Motor neuron (in vitro differentiated cells): ENCODE measurements at regions of chr6 and their contacts with region 1.

Region 1: GRCh38 chr6:104754788-104755409 is 104.8 kb downstream of the HACE1 start:
- ATAC-seq: no peak
- H3K4me3 ChIP-seq: no peak overlapping the region
- H3K27ac ChIP-seq: no peak overlapping the region
- H3K4me1 ChIP-seq: no peaks in the 10 kb centered on the region

Region 2: GRCh38 chr6:104064876-104065275 is 690.0 kb before region 1 on chr6:
- in situ Hi-C with region 1: no loop called
- ATAC-seq: no peak
- H3K4me3 ChIP-seq: no peak overlapping the region
- H3K27ac ChIP-seq: no peak overlapping the region
- H3K4me1 ChIP-seq: no peaks in the 10 kb centered on the region

Region 3: GRCh38 chr6:104613416-104614001 is 141.4 kb before region 1 on chr6:
- in situ Hi-C with region 1: no loop called
- ATAC-seq: peak in 4 of 8 experiments; percentile 8 to 69 (median 46)
- H3K4me3 ChIP-seq: no peak overlapping the region
- H3K27ac ChIP-seq: no peak overlapping the region
- H3K4me1 ChIP-seq: no peaks in the 10 kb centered on the region

Region 4: GRCh38 chr6:104639668-104640067 is 115.2 kb before region 1 on chr6:
- in situ Hi-C with region 1: no loop called
- ATAC-seq: peak in 3 of 8 experiments; percentile 28 to 82 (median 39)
- H3K4me3 ChIP-seq: no peak overlapping the region
- H3K27ac ChIP-seq: no peak overlapping the region
- H3K4me1 ChIP-seq: peaks cover 0 to 3% of the 10 kb centered on the region in 2 donors

Region 5: GRCh38 chr6:104682722-104683643 is 71.9 kb before region 1 on chr6:
- in situ Hi-C with region 1: loop called in 1 of 9 experiments (anchors 5 kb)
- ATAC-seq: peak in 4 of 8 experiments; percentile 44 to 84 (median 66)
- H3K4me3 ChIP-seq: no peak overlapping the region
- H3K27ac ChIP-seq: no peak overlapping the region
- H3K4me1 ChIP-seq: peaks cover 3 to 36% of the 10 kb centered on the region in 2 donors

Region 6: DNA sequence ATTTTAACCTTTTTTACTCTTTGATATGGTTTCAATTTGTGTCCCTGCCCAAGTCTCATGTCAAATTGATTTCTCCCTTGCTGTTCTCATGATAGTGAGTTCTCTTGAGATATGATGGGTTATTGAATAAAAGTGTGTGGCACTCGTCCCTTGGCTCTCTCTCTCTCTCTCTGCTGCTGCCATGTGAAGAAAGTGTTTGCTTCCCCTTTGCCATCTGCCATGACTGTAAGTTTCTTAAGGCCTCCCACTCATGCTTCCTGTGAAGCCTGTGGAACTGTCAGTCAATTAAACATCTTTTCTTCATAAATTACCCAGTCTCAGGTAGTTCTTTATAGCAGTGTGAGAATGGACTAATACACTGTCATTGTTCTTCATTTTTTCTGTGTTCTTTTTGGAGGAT is 250.6 kb after region 1 on chr6:
- in situ Hi-C with region 1: no loop called
- ATAC-seq: no peak
- H3K4me3 ChIP-seq: no peak overlapping the region
- H3K27ac ChIP-seq: no peak overlapping the region
- H3K4me1 ChIP-seq: no peaks in the 10 kb centered on the region